Right ventricle myocardium inferior (tissue), 1 donor: ENCODE measurements at regions of chr6 and their contacts with region 1.

Region 1: GRCh38 chr6:56359201-56359899 is 112.0 kb upstream of the COL21A1 start:
- DNase-seq: no peak
- ATAC-seq: peak; percentile 77

Region 2: GRCh38 chr6:56517155-56517745 is 157.9 kb after region 1 on chr6:
- intact Hi-C with region 1: no loop called
- DNase-seq: no peak
- ATAC-seq: peak; percentile 44

Region 3: GRCh38 chr6:56570413-56571359 is 211.3 kb after region 1 on chr6:
- intact Hi-C with region 1: loop called (anchors 1 kb)
- DNase-seq: no peak
- ATAC-seq: peak; percentile 57

Region 4: GRCh38 chr6:56593801-56594318 is 234.5 kb after region 1 on chr6:
- intact Hi-C with region 1: loop called (anchors 1 kb)
- DNase-seq: no peak
- ATAC-seq: peak; percentile 46

Region 5: DNA sequence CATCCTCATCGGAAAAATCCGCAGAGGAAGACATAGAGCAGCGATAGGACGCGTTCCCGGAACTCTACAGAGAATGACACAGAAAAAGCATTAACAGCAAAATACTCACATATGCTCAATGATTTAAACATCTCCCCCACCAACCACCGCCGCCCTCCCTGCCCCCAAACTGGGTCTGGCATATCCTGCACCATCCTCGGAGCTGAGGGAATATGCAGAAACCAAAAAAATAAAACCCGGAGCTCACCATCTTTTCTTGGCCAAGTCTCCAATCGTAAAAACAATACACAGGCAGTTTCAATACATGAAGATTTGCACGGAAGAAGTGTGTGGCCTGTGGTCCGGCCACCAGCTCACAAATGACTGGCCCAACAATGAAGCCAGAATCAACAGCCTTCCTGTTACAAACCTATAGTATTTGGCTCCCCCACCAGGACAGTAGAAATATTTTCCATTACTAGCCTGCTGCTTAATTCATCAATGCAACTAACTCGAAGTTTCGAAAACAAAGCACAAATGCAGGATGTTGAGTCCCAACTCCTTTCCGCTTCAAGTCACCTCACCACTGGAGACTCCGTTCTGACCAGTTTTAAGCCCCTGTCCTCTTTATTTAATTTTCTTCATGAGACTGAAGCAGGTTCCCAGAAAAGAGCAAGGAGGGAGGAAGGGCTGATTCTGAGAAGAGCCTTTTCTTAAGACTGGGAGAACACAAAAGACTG is 492.4 kb after region 1 on chr6:
- intact Hi-C with region 1: loop called (anchors 5 kb)
- DNase-seq: no peak
- ATAC-seq: peak; percentile 85